ENCODE measurements at regions of chr22 and their contacts with region 1.

Region 1: GRCh38 chr22:44819971-44820631 is 67.7 kb downstream of the ARHGAP8 start:
- DNase-seq: no peak
- ATAC-seq: peak; percentile 24
- H3K4me3 Mint-ChIP-seq: no peak overlapping the region
- H3K27ac Mint-ChIP-seq: peak overlapping the region; percentile 92; the same call in 1 of the 2 replicates
- H3K4me1 Mint-ChIP-seq: peaks cover 23% of the 10 kb centered on the region
- H3K27me3 Mint-ChIP-seq: no peaks in the 10 kb centered on the region
- CTCF ChIP-seq: no peak

Region 2: GRCh38 chr22:44752285-44753188 is 67.6 kb before region 1 on chr22 and contains the start of gene ARHGAP8:
- CTCF ChIA-PET with region 1: interaction called, 10 read pairs
- POLR2A ChIA-PET with region 1: no interaction called
- DNase-seq: peak; percentile 69
- ATAC-seq: peak; percentile 65
- H3K4me3 Mint-ChIP-seq: peak within 1 kb of the TSS; percentile 81
- H3K27ac Mint-ChIP-seq: no peak within 1 kb of the TSS
- H3K4me1 Mint-ChIP-seq: peaks cover 39% of the 10 kb centered on the region
- H3K27me3 Mint-ChIP-seq: peaks cover 3% of the 10 kb centered on the region; the same call in 1 of the 2 replicates
- CTCF ChIP-seq: no peak
- total RNA-seq, gene ARHGAP8: 50.5 to 61.4 TPM (median 58.0 TPM) in 3 replicates

Region 3: GRCh38 chr22:44807915-44808690 is 12.0 kb before region 1 on chr22:
- CTCF ChIA-PET with region 1: interaction called, 13 read pairs
- POLR2A ChIA-PET with region 1: no interaction called
- DNase-seq: peak; percentile 73
- ATAC-seq: peak; percentile 60
- H3K4me3 Mint-ChIP-seq: no peak overlapping the region
- H3K27ac Mint-ChIP-seq: peak overlapping the region; percentile 78; the same call in 1 of the 2 replicates
- H3K4me1 Mint-ChIP-seq: peaks cover 24% of the 10 kb centered on the region
- H3K27me3 Mint-ChIP-seq: no peaks in the 10 kb centered on the region
- CTCF ChIP-seq: 0 out of 2 replicates have a peak, but pooled peaks have one; percentile 43

Region 4: DNA sequence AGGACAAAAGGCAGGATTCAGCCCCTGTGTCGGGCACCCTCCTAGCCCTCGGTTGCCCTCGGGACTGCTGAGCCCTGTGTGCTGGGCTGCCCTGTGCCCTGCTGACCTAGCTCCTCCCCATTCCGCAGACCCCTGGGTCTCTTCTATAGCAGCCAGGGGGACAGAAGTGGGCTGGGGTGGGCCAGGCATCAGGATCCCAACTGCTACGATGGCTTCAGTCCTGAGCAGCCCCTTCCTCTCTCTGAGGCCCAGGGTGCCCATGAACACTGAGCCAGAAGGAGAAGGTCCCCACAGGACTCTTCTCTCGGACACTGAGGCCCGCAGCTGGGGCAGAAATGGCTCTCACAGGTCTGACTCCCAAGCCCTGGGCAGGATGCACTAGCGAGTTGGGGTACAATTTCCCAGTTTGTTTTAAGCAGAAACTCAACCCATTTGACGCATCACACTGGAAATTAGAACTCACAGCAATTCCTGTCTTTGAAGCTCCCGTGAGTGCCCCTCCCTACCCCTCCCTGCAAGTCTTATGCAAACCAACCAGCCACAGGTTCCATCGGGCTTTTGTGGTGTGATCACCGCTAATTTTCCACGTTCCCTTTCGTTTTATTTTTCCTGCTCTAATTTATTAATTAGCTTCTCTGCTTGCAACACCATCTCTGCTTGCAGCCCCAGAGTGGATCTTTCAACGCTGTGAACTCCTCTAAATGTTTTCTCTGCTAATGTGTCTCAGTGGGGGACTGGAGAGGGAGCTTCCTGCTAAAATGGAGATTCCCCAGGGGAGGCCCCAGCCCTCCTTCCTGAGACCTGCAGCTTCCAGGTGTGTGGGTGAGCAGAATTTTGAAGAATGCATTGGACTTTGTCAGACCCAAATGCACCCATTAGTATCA is 133.0 kb after region 1 on chr22:
- CTCF ChIA-PET with region 1: interaction called, 10 read pairs
- POLR2A ChIA-PET with region 1: no interaction called
- DNase-seq: no peak
- ATAC-seq: peak; percentile 16
- H3K4me3 Mint-ChIP-seq: peak overlapping the region; percentile 44
- H3K27ac Mint-ChIP-seq: peak overlapping the region; percentile 76
- H3K4me1 Mint-ChIP-seq: peaks cover 81% of the 10 kb centered on the region
- H3K27me3 Mint-ChIP-seq: no peaks in the 10 kb centered on the region; the same call in 1 of the 2 replicates
- CTCF ChIP-seq: no peak

Region 5: GRCh38 chr22:45072322-45072903 is 252.3 kb after region 1 on chr22:
- CTCF ChIA-PET with region 1: no interaction called
- POLR2A ChIA-PET with region 1: no interaction called
- DNase-seq: peak; percentile 82
- ATAC-seq: peak; percentile 91
- H3K4me3 Mint-ChIP-seq: peak overlapping the region; percentile 62
- H3K27ac Mint-ChIP-seq: peak overlapping the region; percentile 78
- H3K4me1 Mint-ChIP-seq: peaks cover 46% of the 10 kb centered on the region
- H3K27me3 Mint-ChIP-seq: peaks cover 17% of the 10 kb centered on the region
- CTCF ChIP-seq: no peak